G401 (cell line): ENCODE measurements at regions of chr12 and their contacts with region 1.

Region 1: GRCh38 chr12:106903241-106903945 is 52.3 kb upstream of the TMEM263 start:
- DNase-seq: peak; percentile 21

Region 2: DNA sequence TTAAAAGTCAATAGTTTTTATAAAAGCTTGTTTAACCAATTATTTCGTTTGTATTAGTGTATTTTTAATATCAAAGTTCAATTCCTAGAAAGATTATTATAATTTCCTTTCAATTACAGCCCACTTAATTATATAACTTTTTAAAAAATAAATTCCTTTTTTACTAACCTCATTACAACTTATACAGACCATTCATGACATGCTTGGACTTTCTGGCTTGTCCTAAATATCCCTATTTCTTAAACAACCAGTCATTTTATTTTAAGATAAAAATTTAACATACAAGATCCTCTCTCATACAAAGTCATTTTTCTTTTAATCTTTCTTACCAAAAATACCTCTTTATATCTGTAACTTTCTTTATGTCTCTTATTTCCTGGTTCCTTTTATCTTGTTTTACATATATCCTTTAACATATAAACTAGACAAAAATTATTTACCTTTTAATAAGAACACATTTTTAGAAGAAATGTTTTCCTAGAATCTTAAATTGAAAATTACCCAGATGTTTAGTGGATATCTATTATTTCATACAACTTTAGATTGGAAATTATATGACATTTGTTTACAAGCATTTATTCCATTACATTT is 42.0 kb after region 1 on chr12:
- in situ Hi-C with region 1: loop called (anchors 5 kb)
- DNase-seq: no peak